SK-N-SH (cell line): ENCODE measurements at regions of chr2 and their contacts with region 1.

Region 1: GRCh38 chr2:209334198-209335017 is 89.4 kb upstream of the MAP2 start:
- DNase-seq: peak; percentile 56
- H3K4me3 ChIP-seq: peak overlapping the region in 1 of 2 experiments; percentile 42; a peak in 1 of 4 replicates
- H3K27ac ChIP-seq: no peak overlapping the region
- H3K4me1 ChIP-seq: no peaks in the 10 kb centered on the region
- H3K27me3 ChIP-seq: no peaks in the 10 kb centered on the region
- CTCF ChIP-seq: peak; percentile 94
- EP300 ChIP-seq: no peak
- RAD21 ChIP-seq: peak; percentile 96

Region 2: GRCh38 chr2:209322041-209322440 is 12.4 kb before region 1 on chr2:
- CTCF ChIA-PET with region 1: interaction called, 36 read pairs
- POLR2A ChIA-PET with region 1: no interaction called
- DNase-seq: no peak
- H3K4me3 ChIP-seq: no peak overlapping the region
- H3K27ac ChIP-seq: no peak overlapping the region
- H3K4me1 ChIP-seq: peaks cover 0 to 3% of the 10 kb centered on the region in 2 experiments; a peak in 1 of 4 replicates
- H3K27me3 ChIP-seq: no peaks in the 10 kb centered on the region
- CTCF ChIP-seq: peak; percentile 50
- EP300 ChIP-seq: no peak
- RAD21 ChIP-seq: peak; percentile 53

Region 3: GRCh38 chr2:209368900-209369299 is 34.5 kb after region 1 on chr2:
- CTCF ChIA-PET with region 1: interaction called, 10 read pairs
- POLR2A ChIA-PET with region 1: no interaction called
- DNase-seq: no peak
- H3K4me3 ChIP-seq: peak overlapping the region in 1 of 2 experiments; percentile 16; a peak in 2 of 4 replicates
- H3K27ac ChIP-seq: peak overlapping the region; percentile 68 to 89; a peak in 3 of 4 replicates
- H3K4me1 ChIP-seq: peaks cover 2 to 17% of the 10 kb centered on the region in 2 experiments; a peak in 3 of 4 replicates
- H3K27me3 ChIP-seq: no peaks in the 10 kb centered on the region
- CTCF ChIP-seq: no peak
- EP300 ChIP-seq: peak in 1 of 2 experiments; percentile 98; a peak in 2 of 4 replicates
- RAD21 ChIP-seq: no peak

Region 4: GRCh38 chr2:209565896-209566582 is 231.6 kb after region 1 on chr2:
- CTCF ChIA-PET with region 1: interaction called, 14 read pairs
- POLR2A ChIA-PET with region 1: no interaction called
- DNase-seq: no peak
- H3K4me3 ChIP-seq: no peak overlapping the region
- H3K27ac ChIP-seq: no peak overlapping the region
- H3K4me1 ChIP-seq: no peaks in the 10 kb centered on the region; a peak in 1 of 4 replicates
- H3K27me3 ChIP-seq: no peaks in the 10 kb centered on the region
- CTCF ChIP-seq: no peak
- EP300 ChIP-seq: no peak
- RAD21 ChIP-seq: no peak

Region 5: DNA sequence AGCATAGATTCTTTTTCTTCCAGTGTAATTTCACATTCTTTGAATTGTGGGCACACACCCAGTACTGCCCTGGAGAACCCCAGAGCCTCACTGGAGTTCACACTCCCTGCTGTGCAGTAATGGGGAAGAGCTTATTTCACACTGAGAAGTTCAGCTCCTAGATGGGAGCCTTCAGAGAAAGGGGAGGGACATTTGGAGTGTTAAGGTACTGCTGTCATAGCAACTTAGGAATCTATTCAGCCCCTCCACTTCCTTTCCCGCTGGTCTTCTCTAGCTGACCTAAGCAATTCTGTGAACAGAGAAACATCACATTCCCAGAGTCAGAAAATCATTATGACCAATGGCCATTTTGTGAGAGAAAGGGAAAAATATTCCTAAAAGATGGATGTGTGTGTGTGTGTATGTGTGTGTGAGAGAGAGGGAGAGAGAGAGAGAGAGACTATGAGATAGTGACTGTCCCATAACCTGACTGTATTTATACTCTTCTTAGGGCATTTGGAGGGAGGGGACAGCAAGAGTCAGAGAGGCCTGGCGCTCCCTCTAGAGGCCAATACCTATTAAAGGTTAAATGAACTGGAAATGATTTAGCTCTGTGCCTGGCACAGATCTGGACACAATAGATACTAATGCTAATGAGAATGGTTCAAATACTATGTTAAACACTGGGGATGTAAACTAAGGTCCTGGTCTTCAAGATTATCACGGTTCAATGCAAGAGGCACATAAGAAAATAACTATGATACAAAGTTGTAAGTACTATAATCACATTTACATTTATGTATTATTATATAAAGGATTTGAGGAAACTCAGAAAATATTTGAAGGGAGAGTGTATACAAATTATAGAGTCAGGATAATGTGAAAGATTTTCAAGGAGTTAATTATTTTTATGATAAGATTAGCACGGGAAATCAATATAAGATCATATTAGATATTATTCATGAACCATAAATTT is 626.5 kb after region 1 on chr2:
- CTCF ChIA-PET with region 1: interaction called, 38 read pairs
- POLR2A ChIA-PET with region 1: no interaction called
- DNase-seq: peak; percentile 48
- H3K4me3 ChIP-seq: no peak overlapping the region; a peak in 1 of 4 replicates
- H3K27ac ChIP-seq: no peak overlapping the region
- H3K4me1 ChIP-seq: no peaks in the 10 kb centered on the region; a peak in 1 of 4 replicates
- H3K27me3 ChIP-seq: no peaks in the 10 kb centered on the region
- CTCF ChIP-seq: peak; percentile 81
- EP300 ChIP-seq: no peak
- RAD21 ChIP-seq: peak; percentile 80